Activated B cell treated with CpG ODN at 0.5 μM for 24 hours (primary cell): ENCODE measurements at regions of chr1 and their contacts with region 1.

Region 1: DNA sequence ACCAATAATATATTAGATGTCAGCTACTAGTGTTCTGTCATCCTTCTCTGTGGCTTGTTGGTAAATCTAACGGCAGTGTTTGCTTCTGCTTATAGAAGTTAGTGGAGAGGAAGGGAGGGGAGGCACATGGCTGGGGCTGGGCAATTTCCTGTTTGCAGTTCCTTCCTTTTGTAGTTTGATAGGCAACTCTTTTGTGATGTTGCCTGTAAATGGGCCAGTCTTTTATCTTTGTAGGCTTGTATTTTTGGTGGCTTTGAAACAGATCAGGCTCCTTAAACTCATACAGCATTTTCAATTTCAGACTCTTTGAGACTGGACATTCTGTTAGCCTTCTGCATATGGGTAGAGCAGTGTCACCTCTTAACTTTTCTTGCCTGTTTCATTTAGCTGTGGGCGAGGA is 48.1 kb downstream of the CDC14A start:
- DNase-seq: no peak
- ATAC-seq: peak; percentile 75
- H3K4me3 Mint-ChIP-seq: peak overlapping the region; percentile 58
- H3K27ac Mint-ChIP-seq: peak overlapping the region; percentile 79
- H3K4me1 Mint-ChIP-seq: peaks cover 65% of the 10 kb centered on the region
- H3K27me3 Mint-ChIP-seq: no peaks in the 10 kb centered on the region
- CTCF ChIP-seq: no peak

Region 2: GRCh38 chr1:100387209-100387608 is 13.2 kb before region 1 on chr1:
- CTCF ChIA-PET with region 1: no interaction called
- POLR2A ChIA-PET with region 1: interaction called, 3 read pairs
- intact Hi-C with region 1: loop called (anchors 1 kb)
- DNase-seq: no peak
- ATAC-seq: no peak
- H3K4me3 Mint-ChIP-seq: peak overlapping the region; percentile 39
- H3K27ac Mint-ChIP-seq: no peak overlapping the region
- H3K4me1 Mint-ChIP-seq: peaks cover 45% of the 10 kb centered on the region
- H3K27me3 Mint-ChIP-seq: no peaks in the 10 kb centered on the region
- CTCF ChIP-seq: no peak

Region 3: DNA sequence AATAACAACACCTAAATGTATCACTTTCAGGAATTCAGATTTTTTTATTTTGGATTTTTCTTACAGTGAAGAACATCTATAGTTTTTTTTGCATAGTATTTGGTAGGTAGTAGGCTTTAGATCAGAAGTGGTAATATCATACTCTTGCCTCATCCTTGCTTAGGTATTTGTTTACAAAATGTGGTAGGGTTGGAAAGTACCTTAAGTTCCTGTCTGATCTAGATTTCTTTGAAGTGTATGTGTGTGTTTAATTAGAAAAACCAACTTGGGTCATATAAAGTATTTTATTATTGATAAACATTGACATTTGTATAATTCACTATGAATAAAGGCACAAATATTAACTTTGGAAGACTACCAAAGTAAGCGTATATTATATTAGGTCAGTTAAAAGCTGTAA is 52.2 kb after region 1 on chr1:
- CTCF ChIA-PET with region 1: no interaction called
- POLR2A ChIA-PET with region 1: no interaction called
- intact Hi-C with region 1: loop called (anchors 2 kb)
- DNase-seq: no peak
- ATAC-seq: peak; percentile 75
- H3K4me3 Mint-ChIP-seq: no peak overlapping the region
- H3K27ac Mint-ChIP-seq: peak overlapping the region; percentile 56
- H3K4me1 Mint-ChIP-seq: peaks cover 9% of the 10 kb centered on the region
- H3K27me3 Mint-ChIP-seq: no peaks in the 10 kb centered on the region
- CTCF ChIP-seq: no peak

Region 4: GRCh38 chr1:101051688-101052638 is 651.6 kb after region 1 on chr1:
- CTCF ChIA-PET with region 1: no interaction called
- POLR2A ChIA-PET with region 1: no interaction called
- intact Hi-C with region 1: no loop called
- DNase-seq: peak; percentile 27
- ATAC-seq: peak; percentile 88
- H3K4me3 Mint-ChIP-seq: peak overlapping the region; percentile 78
- H3K27ac Mint-ChIP-seq: peak overlapping the region; percentile 95
- H3K4me1 Mint-ChIP-seq: peaks cover 70% of the 10 kb centered on the region
- H3K27me3 Mint-ChIP-seq: no peaks in the 10 kb centered on the region
- CTCF ChIP-seq: no peak